ENCODE measurements at regions of chr15 and their contacts with region 1.

Region 1: DNA sequence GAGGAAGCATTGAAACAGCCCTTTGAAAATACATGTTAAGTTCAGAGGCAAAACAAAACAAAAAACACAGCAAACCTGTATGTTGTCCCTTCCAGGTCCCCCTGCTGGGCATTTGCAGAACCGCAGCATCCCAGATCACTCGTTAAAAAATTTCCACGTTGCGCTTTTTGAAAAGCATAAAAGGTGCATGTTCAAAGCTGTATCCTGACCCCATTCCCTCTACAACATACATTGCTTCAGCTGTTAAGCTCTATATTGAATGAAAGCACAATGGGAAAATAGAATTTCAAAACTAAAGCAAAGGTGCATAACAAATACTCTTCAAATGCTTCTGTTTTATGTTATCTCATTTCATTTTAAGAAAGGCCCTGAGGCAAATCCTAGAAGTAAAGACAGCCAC is 328.3 kb downstream of the THSD4 start:
- DNase-seq: no peak
- ATAC-seq: peak; percentile 46
- H3K4me3 ChIP-seq: no peak overlapping the region
- H3K27ac ChIP-seq: no peak overlapping the region
- H3K4me1 ChIP-seq: no peaks in the 10 kb centered on the region
- H3K27me3 ChIP-seq: no peaks in the 10 kb centered on the region; a peak in 1 of 4 replicates
- CTCF ChIP-seq: peak; percentile 65 to 86 (median 84)
- EP300 ChIP-seq: no peak
- POLR2A ChIP-seq: no peak
- RAD21 ChIP-seq: peak; percentile 39

Region 2: GRCh38 chr15:70826634-70827033 is 616.9 kb before region 1 on chr15:
- CTCF ChIA-PET with region 1: interaction called, 18 read pairs
- POLR2A ChIA-PET with region 1: no interaction called
- RAD21 ChIA-PET with region 1: interaction called, 10 read pairs
- SMC1A ChIA-PET with region 1: interaction called, 8 read pairs
- in situ Hi-C with region 1: loop called (anchors 5 kb)
- intact Hi-C with region 1: loop called (anchors 2 kb)
- DNase-seq: no peak
- ATAC-seq: no peak
- H3K4me3 ChIP-seq: no peak overlapping the region
- H3K27ac ChIP-seq: no peak overlapping the region
- H3K4me1 ChIP-seq: no peaks in the 10 kb centered on the region
- H3K27me3 ChIP-seq: no peaks in the 10 kb centered on the region
- CTCF ChIP-seq: no peak
- EP300 ChIP-seq: no peak
- POLR2A ChIP-seq: no peak
- RAD21 ChIP-seq: no peak

Region 3: GRCh38 chr15:70892002-70892914 is 551.3 kb before region 1 on chr15 and contains the starts of genes LRRC49 and THAP10:
- CTCF ChIA-PET with region 1: no interaction called
- POLR2A ChIA-PET with region 1: no interaction called
- RAD21 ChIA-PET with region 1: no interaction called
- SMC1A ChIA-PET with region 1: no interaction called
- in situ Hi-C with region 1: no loop called
- intact Hi-C with region 1: loop called (anchors 5 kb)
- DNase-seq: peak; percentile 64
- ATAC-seq: peak; percentile 93
- H3K4me3 ChIP-seq: peak within 1 kb of the TSS; percentile 72
- H3K27ac ChIP-seq: peak within 1 kb of the TSS; percentile 51
- H3K4me1 ChIP-seq: no peaks in the 10 kb centered on the region
- H3K27me3 ChIP-seq: no peaks in the 10 kb centered on the region
- CTCF ChIP-seq: no peak
- EP300 ChIP-seq: no peak
- POLR2A ChIP-seq: 0 out of 2 replicates have a peak, but pooled peaks have one; percentile 30
- RAD21 ChIP-seq: no peak
- polyA plus RNA-seq, gene LRRC49: 1.5 to 3.1 TPM
- polyA plus RNA-seq, gene THAP10: 0.35 to 0.39 TPM

Region 4: GRCh38 chr15:70974004-70974832 is 469.3 kb before region 1 on chr15:
- CTCF ChIA-PET with region 1: interaction called, 6 read pairs
- POLR2A ChIA-PET with region 1: no interaction called
- RAD21 ChIA-PET with region 1: no interaction called
- SMC1A ChIA-PET with region 1: interaction called, 4 read pairs
- in situ Hi-C with region 1: loop called (anchors 25 kb)
- intact Hi-C with region 1: loop called (anchors 5 kb)
- DNase-seq: no peak
- ATAC-seq: no peak
- H3K4me3 ChIP-seq: no peak overlapping the region
- H3K27ac ChIP-seq: no peak overlapping the region
- H3K4me1 ChIP-seq: no peaks in the 10 kb centered on the region
- H3K27me3 ChIP-seq: no peaks in the 10 kb centered on the region
- CTCF ChIP-seq: peak in 1 of 3 experiments; percentile 19; a peak in 1 of 6 replicates
- EP300 ChIP-seq: no peak
- POLR2A ChIP-seq: no peak
- RAD21 ChIP-seq: 0 out of 2 replicates have a peak, but pooled peaks have one; percentile 37

Region 5: GRCh38 chr15:71011503-71012155 is 431.9 kb before region 1 on chr15:
- CTCF ChIA-PET with region 1: interaction called, 5 read pairs
- POLR2A ChIA-PET with region 1: no interaction called
- RAD21 ChIA-PET with region 1: interaction called, 4 read pairs
- SMC1A ChIA-PET with region 1: interaction called, 7 read pairs
- in situ Hi-C with region 1: no loop called
- intact Hi-C with region 1: loop called (anchors 5 kb)
- DNase-seq: no peak
- ATAC-seq: peak; percentile 61
- H3K4me3 ChIP-seq: no peak overlapping the region
- H3K27ac ChIP-seq: no peak overlapping the region
- H3K4me1 ChIP-seq: no peaks in the 10 kb centered on the region
- H3K27me3 ChIP-seq: no peaks in the 10 kb centered on the region
- CTCF ChIP-seq: peak; percentile 51 to 70 (median 59)
- EP300 ChIP-seq: no peak
- POLR2A ChIP-seq: no peak
- RAD21 ChIP-seq: peak; percentile 60

Region 6: GRCh38 chr15:71114896-71115554 is 328.5 kb before region 1 on chr15 and contains the start of gene THSD4:
- CTCF ChIA-PET with region 1: no interaction called
- POLR2A ChIA-PET with region 1: no interaction called
- RAD21 ChIA-PET with region 1: no interaction called
- SMC1A ChIA-PET with region 1: no interaction called
- in situ Hi-C with region 1: loop called (anchors 25 kb)
- intact Hi-C with region 1: loop called (anchors 5 kb)
- DNase-seq: no peak
- ATAC-seq: peak; percentile 94
- H3K4me3 ChIP-seq: peak within 1 kb of the TSS; percentile 28; the same call in 1 of the 2 replicates
- H3K27ac ChIP-seq: no peak within 1 kb of the TSS
- H3K4me1 ChIP-seq: no peaks in the 10 kb centered on the region
- H3K27me3 ChIP-seq: peaks cover 2 to 5% of the 10 kb centered on the region in 2 experiments; a peak in 1 of 4 replicates
- CTCF ChIP-seq: peak; percentile 63 to 94 (median 84)
- EP300 ChIP-seq: no peak
- POLR2A ChIP-seq: no peak
- RAD21 ChIP-seq: peak; percentile 58
- polyA plus RNA-seq, gene THSD4: not detected

Region 7: DNA sequence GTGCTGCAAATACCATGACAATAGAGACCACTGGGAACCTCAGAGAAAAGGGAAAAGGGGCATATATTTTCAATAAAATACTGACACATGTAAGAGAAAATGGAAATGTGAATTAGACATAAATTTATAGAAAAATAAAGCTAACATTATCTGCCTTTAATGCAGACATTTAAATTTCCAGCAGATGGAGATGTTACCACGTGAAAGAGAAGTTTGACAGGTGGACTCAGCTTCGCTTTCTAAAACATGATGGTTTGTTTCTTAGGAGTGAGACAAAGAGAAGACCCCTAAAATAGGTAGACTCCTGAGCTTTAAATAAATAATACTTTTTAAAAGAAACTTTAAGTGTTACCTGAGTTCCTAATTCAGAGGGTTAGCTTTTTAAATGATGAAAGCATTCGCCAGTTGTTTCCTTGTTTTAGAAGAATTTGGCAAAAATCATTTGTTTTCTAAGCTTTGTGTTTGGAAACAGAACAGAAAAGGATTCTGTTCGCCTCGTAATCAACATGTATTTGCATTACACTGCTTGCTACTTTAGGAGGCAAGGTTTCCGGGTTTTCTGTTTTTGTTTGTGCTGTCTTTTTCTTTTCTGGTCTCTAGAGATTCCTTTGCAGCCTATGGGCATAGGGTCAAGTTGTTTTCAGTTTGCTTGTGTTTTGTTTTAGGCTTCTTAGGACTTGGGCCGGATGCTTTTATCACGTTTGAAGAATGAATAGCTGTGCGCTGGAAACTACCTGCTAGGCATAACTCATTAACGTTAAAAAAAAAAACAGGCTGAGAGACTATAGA is 56.9 kb before region 1 on chr15:
- CTCF ChIA-PET with region 1: interaction called, 15 read pairs
- POLR2A ChIA-PET with region 1: no interaction called
- RAD21 ChIA-PET with region 1: interaction called, 9 read pairs
- SMC1A ChIA-PET with region 1: interaction called, 16 read pairs
- in situ Hi-C with region 1: no loop called
- intact Hi-C with region 1: loop called (anchors 5 kb)
- DNase-seq: no peak
- ATAC-seq: no peak
- H3K4me3 ChIP-seq: no peak overlapping the region
- H3K27ac ChIP-seq: no peak overlapping the region
- H3K4me1 ChIP-seq: no peaks in the 10 kb centered on the region
- H3K27me3 ChIP-seq: no peaks in the 10 kb centered on the region; a peak in 1 of 4 replicates
- CTCF ChIP-seq: peak in 2 of 3 experiments; percentile 28 to 32; a peak in 2 of 6 replicates
- EP300 ChIP-seq: no peak
- POLR2A ChIP-seq: no peak
- RAD21 ChIP-seq: peak; percentile 62

Measured in GM12878 (cell line).